A673 (cell line): ENCODE measurements at regions of chr6 and their contacts with region 1.

Region 1: DNA sequence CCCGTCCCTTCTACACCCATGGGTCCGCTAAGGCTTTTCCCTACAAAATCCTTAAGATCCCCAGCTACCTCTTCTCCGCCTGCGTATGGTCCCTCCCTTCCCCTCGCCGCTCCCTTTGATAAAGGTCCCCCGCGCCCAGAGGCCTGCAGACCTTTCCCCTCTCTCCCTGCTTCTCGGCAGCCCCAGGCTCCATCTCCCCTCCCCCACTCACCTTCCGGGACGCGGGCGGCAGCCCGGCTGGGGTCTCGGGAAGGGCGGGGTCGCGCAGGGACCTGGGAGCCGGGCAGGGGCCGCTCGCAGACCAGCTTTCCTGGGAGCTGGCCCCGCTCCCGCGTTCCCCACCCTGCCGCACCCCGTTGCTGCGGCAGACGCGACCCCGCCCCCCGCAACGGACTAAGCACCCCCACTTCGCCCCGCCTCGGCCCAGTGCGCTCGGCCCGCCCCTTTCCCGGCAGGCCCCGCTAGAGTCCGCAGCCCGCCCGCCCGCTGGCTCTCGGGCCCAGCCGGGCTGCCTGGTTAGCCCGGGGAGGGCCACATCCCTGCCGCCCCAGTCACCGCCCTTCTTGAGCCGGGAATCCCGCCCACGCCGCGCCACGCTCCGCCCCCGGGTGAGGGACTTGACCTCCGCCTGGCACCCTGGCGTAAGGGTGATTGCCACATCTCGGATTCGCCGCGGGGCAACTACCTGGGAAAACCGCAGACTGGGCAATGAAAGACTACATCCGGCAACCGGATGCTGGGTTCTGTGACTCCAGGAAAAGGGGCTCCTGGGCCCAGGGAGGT is at the start of gene FLOT1:
- DNase-seq: peak; percentile 92
- H3K4me3 ChIP-seq: peak within 1 kb of the TSS; percentile 90
- H3K27ac ChIP-seq: peak within 1 kb of the TSS; percentile 80
- H3K4me1 ChIP-seq: peaks cover 11% of the 10 kb centered on the region
- H3K27me3 ChIP-seq: no peaks in the 10 kb centered on the region
- CTCF ChIP-seq: no peak
- total RNA-seq, gene FLOT1: 116 and 120 TPM in 2 replicates

Region 2: GRCh38 chr6:30781743-30782424 is 39.4 kb after region 1 on chr6:
- CTCF ChIA-PET with region 1: no interaction called
- POLR2A ChIA-PET with region 1: no interaction called
- intact Hi-C with region 1: loop called (anchors 2 kb)
- DNase-seq: peak; percentile 98
- H3K4me3 ChIP-seq: peak overlapping the region; percentile 24
- H3K27ac ChIP-seq: peak overlapping the region; percentile 89
- H3K4me1 ChIP-seq: peaks cover 44% of the 10 kb centered on the region
- H3K27me3 ChIP-seq: no peaks in the 10 kb centered on the region
- CTCF ChIP-seq: no peak

Region 3: GRCh38 chr6:30821862-30822782 is 79.6 kb after region 1 on chr6:
- CTCF ChIA-PET with region 1: no interaction called
- POLR2A ChIA-PET with region 1: no interaction called
- intact Hi-C with region 1: loop called (anchors 2 kb)
- DNase-seq: peak; percentile 66
- H3K4me3 ChIP-seq: no peak overlapping the region
- H3K27ac ChIP-seq: peak overlapping the region; percentile 7
- H3K4me1 ChIP-seq: peaks cover 22% of the 10 kb centered on the region
- H3K27me3 ChIP-seq: no peaks in the 10 kb centered on the region
- CTCF ChIP-seq: peak; percentile 61

Region 4: DNA sequence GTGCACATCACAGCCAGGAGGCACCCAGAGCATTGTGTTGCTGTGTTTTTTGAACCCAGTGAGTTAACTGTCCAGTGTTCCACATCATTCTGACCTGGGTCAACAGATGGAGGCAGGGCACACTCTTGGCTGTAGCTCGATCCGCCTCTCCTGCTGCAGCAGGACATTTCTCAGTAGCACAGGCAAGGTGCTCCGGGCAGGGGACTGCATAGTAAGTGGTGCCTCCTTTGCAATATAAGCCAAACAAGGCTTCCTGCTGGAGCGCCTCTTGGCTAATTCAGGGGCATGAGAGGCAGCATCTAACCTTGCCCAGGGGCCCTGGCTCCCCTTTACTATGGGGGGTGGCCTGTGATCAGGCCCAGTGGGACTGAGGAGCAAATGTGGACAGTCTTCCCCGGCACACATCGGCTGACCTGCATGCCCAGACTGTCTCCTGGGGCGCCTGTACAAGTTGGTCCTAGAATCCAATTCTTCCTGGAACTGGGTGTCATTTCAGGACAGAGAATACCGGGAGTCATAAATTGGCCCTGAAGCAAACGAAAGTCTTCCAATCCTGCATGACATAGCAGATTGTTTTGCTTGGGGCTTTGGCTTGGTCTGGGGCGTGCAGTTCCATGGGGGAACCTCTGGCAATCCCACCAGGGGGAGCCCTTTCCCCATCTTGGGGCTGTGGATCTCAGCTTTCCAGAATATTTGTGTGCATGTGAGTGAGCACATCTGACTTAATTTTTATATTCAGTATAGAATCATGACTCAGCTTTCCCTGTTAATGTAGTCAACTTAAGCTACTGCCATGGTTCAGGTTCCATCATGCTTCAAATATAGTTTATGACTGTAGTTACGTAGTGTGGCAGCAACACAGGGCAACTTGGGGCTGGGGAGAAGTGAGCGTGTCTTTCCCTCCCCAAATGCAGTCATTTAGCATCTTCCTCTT is 85.8 kb after region 1 on chr6:
- CTCF ChIA-PET with region 1: interaction called, 10 read pairs
- POLR2A ChIA-PET with region 1: no interaction called
- intact Hi-C with region 1: loop called (anchors 2 kb)
- DNase-seq: peak; percentile 90
- H3K4me3 ChIP-seq: no peak overlapping the region
- H3K27ac ChIP-seq: peak overlapping the region; percentile 40
- H3K4me1 ChIP-seq: peaks cover 5% of the 10 kb centered on the region
- H3K27me3 ChIP-seq: no peaks in the 10 kb centered on the region
- CTCF ChIP-seq: peak; percentile 96

Region 5: GRCh38 chr6:30877419-30878371 is 135.2 kb after region 1 on chr6:
- CTCF ChIA-PET with region 1: no interaction called
- POLR2A ChIA-PET with region 1: no interaction called
- intact Hi-C with region 1: loop called (anchors 5 kb)
- DNase-seq: peak; percentile 88
- H3K4me3 ChIP-seq: peak overlapping the region; percentile 31
- H3K27ac ChIP-seq: no peak overlapping the region
- H3K4me1 ChIP-seq: peaks cover 3% of the 10 kb centered on the region
- H3K27me3 ChIP-seq: no peaks in the 10 kb centered on the region
- CTCF ChIP-seq: peak; percentile 93